K562 (cell line): ENCODE measurements at regions of chr9 and their contacts with region 1.

Region 1: DNA sequence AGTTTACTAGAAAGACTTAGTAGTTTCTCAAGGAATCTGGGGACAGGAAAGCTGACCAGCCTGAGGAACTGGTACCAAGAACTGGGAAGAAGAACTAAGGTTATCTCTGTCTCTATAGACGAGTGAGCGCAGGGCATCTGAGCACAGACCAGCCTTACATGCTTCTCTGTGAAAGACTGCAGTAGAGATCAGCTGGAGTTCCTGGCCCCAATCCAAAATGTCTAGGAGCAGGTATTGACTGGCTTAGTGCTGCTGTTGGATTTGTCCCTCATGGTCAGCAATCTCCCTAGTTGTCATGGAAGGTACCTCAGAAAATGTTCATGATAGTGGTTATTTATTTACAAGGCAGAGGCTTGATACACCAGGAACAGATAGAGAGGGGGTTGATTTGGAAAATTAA is 13.3 kb downstream of the NUP214 start:
- DNase-seq: peak in 3 of 4 experiments; percentile 63 to 80 (median 78)
- ATAC-seq: peak; percentile 7
- H3K4me3 ChIP-seq: no peak overlapping the region
- H3K27ac ChIP-seq: no peak overlapping the region
- H3K4me1 ChIP-seq: peaks cover 0 to 6% of the 10 kb centered on the region in 2 experiments; a peak in 2 of 5 replicates
- H3K27me3 ChIP-seq: no peaks in the 10 kb centered on the region
- CTCF ChIP-seq: no peak
- EP300 ChIP-seq: no peak
- POLR2A ChIP-seq: no peak
- RAD21 ChIP-seq: no peak

Region 2: DNA sequence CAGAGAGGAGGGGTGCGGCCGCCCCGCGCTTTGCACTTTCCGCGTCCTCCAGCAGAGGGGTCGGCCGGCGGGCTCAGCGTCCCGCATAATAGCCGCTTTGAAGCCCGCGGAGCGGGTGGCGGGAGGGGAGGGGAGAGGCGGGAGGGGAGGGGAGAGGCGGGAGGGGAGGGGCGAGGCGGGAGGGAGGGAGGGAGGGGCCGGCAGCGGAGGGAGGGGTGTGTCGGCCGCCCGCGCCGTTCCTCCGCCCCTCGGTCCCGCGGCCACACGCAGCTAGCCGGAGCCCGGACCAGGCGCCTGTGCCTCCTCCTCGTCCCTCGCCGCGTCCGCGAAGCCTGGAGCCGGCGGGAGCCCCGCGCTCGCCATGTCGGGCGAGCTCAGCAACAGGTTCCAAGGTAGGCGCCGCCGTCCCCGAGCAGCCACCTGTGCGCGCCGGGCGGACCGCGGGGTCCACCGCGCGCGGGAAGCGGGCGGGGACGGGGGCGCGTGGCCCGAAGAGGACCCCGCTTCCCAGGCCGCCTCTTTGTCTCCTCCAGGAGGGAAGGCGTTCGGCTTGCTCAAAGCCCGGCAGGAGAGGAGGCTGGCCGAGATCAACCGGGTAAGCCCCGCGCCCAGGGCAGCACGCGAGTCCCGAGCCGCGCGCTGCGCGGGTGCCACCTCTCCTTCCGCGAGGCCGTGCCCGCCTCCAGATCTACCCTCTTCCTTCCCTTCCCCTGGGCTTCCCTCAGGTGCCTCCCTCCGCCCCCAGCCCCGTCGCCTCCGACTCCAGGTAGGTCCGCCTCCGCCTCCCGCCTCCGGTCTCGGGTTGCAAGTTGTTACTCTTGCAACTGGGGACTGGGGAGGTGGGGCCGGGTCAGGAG is 42.2 kb before region 1 on chr9 and contains the start of gene AIF1L:
- CTCF ChIA-PET with region 1: no interaction called
- POLR2A ChIA-PET with region 1: interaction called, 3,336 read pairs
- in situ Hi-C with region 1: no loop called
- intact Hi-C with region 1: no loop called
- DNase-seq: peak; percentile 87 to 100 (median 100)
- ATAC-seq: peak; percentile 65
- H3K4me3 ChIP-seq: peak within 1 kb of the TSS; percentile 35
- H3K27ac ChIP-seq: no peak within 1 kb of the TSS
- H3K4me1 ChIP-seq: peaks cover 22 to 62% of the 10 kb centered on the region in 2 experiments
- H3K27me3 ChIP-seq: peaks cover 70 to 90% of the 10 kb centered on the region in 2 experiments
- CTCF ChIP-seq: no peak
- EP300 ChIP-seq: no peak
- POLR2A ChIP-seq: no peak
- RAD21 ChIP-seq: no peak
- polyA plus RNA-seq, gene AIF1L: 0.34 to 0.77 TPM

Region 3: GRCh38 chr9:131149688-131150053 is 11.0 kb after region 1 on chr9:
- CTCF ChIA-PET with region 1: interaction called, 4 read pairs
- POLR2A ChIA-PET with region 1: interaction called, 583 read pairs
- in situ Hi-C with region 1: no loop called
- intact Hi-C with region 1: no loop called
- DNase-seq: peak in 1 of 4 experiments; percentile 63
- ATAC-seq: peak; percentile 2; the same call in 2 of the 3 replicates
- H3K4me3 ChIP-seq: no peak overlapping the region
- H3K27ac ChIP-seq: peak overlapping the region; percentile 1; the same call in 2 of the 3 replicates
- H3K4me1 ChIP-seq: no peaks in the 10 kb centered on the region
- H3K27me3 ChIP-seq: no peaks in the 10 kb centered on the region
- CTCF ChIP-seq: no peak
- EP300 ChIP-seq: no peak
- POLR2A ChIP-seq: no peak
- RAD21 ChIP-seq: no peak

Region 4: GRCh38 chr9:131167146-131167692 is 28.5 kb after region 1 on chr9:
- CTCF ChIA-PET with region 1: no interaction called
- POLR2A ChIA-PET with region 1: interaction called, 300 read pairs
- in situ Hi-C with region 1: no loop called
- intact Hi-C with region 1: no loop called
- DNase-seq: peak in 1 of 4 experiments; percentile 48
- ATAC-seq: peak; percentile 33
- H3K4me3 ChIP-seq: no peak overlapping the region
- H3K27ac ChIP-seq: no peak overlapping the region
- H3K4me1 ChIP-seq: no peaks in the 10 kb centered on the region
- H3K27me3 ChIP-seq: no peaks in the 10 kb centered on the region
- CTCF ChIP-seq: no peak
- EP300 ChIP-seq: no peak
- POLR2A ChIP-seq: no peak
- RAD21 ChIP-seq: no peak

Region 5: GRCh38 chr9:131187957-131188356 is 49.3 kb after region 1 on chr9:
- CTCF ChIA-PET with region 1: interaction called, 5 read pairs
- POLR2A ChIA-PET with region 1: interaction called, 4 read pairs
- in situ Hi-C with region 1: no loop called
- intact Hi-C with region 1: loop called (anchors 2 kb)
- DNase-seq: no peak
- ATAC-seq: 0 out of 3 replicates have a peak, but pooled peaks have one; percentile 3
- H3K4me3 ChIP-seq: no peak overlapping the region
- H3K27ac ChIP-seq: no peak overlapping the region
- H3K4me1 ChIP-seq: no peaks in the 10 kb centered on the region
- H3K27me3 ChIP-seq: no peaks in the 10 kb centered on the region
- CTCF ChIP-seq: no peak
- EP300 ChIP-seq: no peak
- POLR2A ChIP-seq: no peak
- RAD21 ChIP-seq: no peak

Region 6: GRCh38 chr9:131885144-131885609 is 746.5 kb after region 1 on chr9:
- CTCF ChIA-PET with region 1: no interaction called
- POLR2A ChIA-PET with region 1: no interaction called
- in situ Hi-C with region 1: no loop called
- intact Hi-C with region 1: no loop called
- DNase-seq: no peak
- ATAC-seq: no peak
- H3K4me3 ChIP-seq: no peak overlapping the region
- H3K27ac ChIP-seq: no peak overlapping the region
- H3K4me1 ChIP-seq: peaks cover 0 to 3% of the 10 kb centered on the region in 2 experiments; a peak in 1 of 5 replicates
- H3K27me3 ChIP-seq: no peaks in the 10 kb centered on the region
- CTCF ChIP-seq: no peak
- EP300 ChIP-seq: no peak
- POLR2A ChIP-seq: no peak
- RAD21 ChIP-seq: no peak